Testis (tissue), 5 donors: ENCODE measurements at regions of chr11 and their contacts with region 1.

Region 1: GRCh38 chr11:12411806-12412727 is 34.7 kb downstream of the PARVA start:
- DNase-seq: peak; percentile 78
- H3K4me3 ChIP-seq: no peak overlapping the region
- H3K27ac ChIP-seq: peak overlapping the region in 1 of 2 donors; percentile 57
- H3K4me1 ChIP-seq: peaks cover 28% of the 10 kb centered on the region
- H3K27me3 ChIP-seq: no peaks in the 10 kb centered on the region
- CTCF ChIP-seq: peak; percentile 49 to 74 (median 71)
- POLR2A ChIP-seq: no peak

Region 2: GRCh38 chr11:12888525-12889158 is 476.6 kb after region 1 on chr11:
- intact Hi-C with region 1: loop called (anchors 10 kb)
- DNase-seq: peak; percentile 94
- H3K4me3 ChIP-seq: no peak overlapping the region
- H3K27ac ChIP-seq: peak overlapping the region; percentile 38 to 58
- H3K4me1 ChIP-seq: peaks cover 16% of the 10 kb centered on the region
- H3K27me3 ChIP-seq: no peaks in the 10 kb centered on the region
- CTCF ChIP-seq: peak; percentile 64 to 76 (median 69)
- POLR2A ChIP-seq: no peak